BJ (cell line): ENCODE measurements at regions of chr10 and their contacts with region 1.

Region 1: DNA sequence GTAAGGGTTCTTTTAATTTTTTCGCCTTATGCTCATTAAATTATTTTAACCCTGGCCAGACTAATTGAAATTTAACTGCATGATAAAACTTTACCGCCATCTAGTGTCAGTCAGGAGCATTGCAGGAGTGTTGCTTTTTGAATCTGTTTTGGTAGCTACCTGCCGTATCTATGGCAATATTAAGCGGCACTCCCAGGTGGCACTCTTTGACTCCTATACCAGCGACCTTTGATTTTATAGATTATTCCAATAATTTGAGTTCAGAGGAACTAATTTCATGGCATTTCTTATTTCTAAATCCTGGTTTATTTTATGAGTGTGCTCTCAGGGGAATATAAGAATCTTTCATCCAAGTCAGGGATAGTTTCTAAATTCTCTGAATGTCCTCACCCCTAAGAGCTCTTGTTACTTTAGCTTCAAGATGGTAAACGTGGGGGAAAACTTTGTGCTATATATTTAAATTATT is 198.9 kb downstream of the REEP3 start:
- DNase-seq: no peak
- H3K4me3 ChIP-seq: no peak overlapping the region
- H3K27me3 ChIP-seq: peaks cover 3% of the 10 kb centered on the region
- CTCF ChIP-seq: peak; percentile 86

Region 2: GRCh38 chr10:63166742-63167258 is 553.3 kb before region 1 on chr10:
- CTCF ChIA-PET with region 1: interaction called, 148 read pairs
- POLR2A ChIA-PET with region 1: no interaction called
- DNase-seq: peak; percentile 24
- H3K4me3 ChIP-seq: no peak overlapping the region
- H3K27me3 ChIP-seq: no peaks in the 10 kb centered on the region
- CTCF ChIP-seq: peak; percentile 76

Region 3: GRCh38 chr10:63217120-63217605 is 502.9 kb before region 1 on chr10:
- CTCF ChIA-PET with region 1: interaction called, 13 read pairs
- POLR2A ChIA-PET with region 1: no interaction called
- DNase-seq: peak; percentile 19
- H3K4me3 ChIP-seq: no peak overlapping the region
- H3K27me3 ChIP-seq: no peaks in the 10 kb centered on the region
- CTCF ChIP-seq: peak; percentile 62

Region 4: GRCh38 chr10:63629363-63630084 is 90.6 kb before region 1 on chr10:
- CTCF ChIA-PET with region 1: interaction called, 40 read pairs
- POLR2A ChIA-PET with region 1: interaction called, 3 read pairs
- DNase-seq: peak; percentile 96
- H3K4me3 ChIP-seq: peak overlapping the region; percentile 62
- H3K27me3 ChIP-seq: no peaks in the 10 kb centered on the region
- CTCF ChIP-seq: peak; percentile 86

Region 5: DNA sequence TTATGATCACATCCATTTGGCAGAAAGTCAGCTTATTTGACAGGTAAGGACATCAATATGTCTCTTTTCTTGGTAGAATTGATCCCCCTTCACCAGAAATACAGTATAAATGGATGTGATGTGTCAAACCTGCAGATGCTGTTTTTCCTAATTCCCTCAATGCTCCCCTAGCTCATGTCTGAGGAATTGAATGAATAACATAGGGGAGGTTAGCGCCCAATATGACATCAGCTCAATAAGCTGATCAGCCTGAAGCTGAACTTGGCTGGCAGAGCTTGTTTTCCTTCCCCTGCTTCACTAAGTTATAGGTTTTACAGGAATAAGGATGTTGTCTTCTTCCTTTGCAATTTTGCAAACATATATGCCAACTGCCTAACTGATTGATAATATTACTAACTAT is 66.4 kb before region 1 on chr10:
- CTCF ChIA-PET with region 1: no interaction called
- POLR2A ChIA-PET with region 1: no interaction called
- DNase-seq: no peak
- H3K4me3 ChIP-seq: no peak overlapping the region
- H3K27me3 ChIP-seq: no peaks in the 10 kb centered on the region
- CTCF ChIP-seq: no peak

Region 6: DNA sequence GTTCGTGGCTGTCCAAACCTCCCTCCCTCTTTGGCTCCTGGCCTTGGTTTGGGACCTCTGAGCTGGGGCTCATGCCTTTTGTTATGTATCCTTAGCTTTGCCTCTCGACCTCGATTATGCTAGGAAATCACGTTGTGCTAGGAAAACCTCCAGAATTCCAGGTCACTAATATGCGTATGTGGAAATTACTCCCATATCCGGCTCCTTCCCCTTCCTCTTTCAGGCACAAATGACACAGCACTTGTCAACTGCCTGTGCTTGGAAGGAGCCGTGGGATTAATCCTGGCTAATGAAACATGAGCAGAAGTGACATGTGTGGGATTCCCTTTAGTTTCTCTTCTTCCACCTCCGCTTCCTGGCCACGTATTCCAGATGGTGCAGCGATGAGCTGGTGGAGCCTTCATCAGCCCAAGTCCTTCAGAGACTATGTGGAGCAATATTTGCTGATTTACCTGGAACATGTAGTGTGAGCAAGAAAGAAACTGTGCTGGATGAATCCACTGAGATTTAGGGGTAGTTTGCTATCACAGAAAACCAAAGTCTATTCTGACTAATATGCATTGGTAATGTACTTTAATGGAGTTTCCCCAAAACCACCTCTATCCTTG is 49.7 kb before region 1 on chr10:
- CTCF ChIA-PET with region 1: interaction called, 11 read pairs
- POLR2A ChIA-PET with region 1: no interaction called
- DNase-seq: no peak
- H3K4me3 ChIP-seq: no peak overlapping the region
- H3K27me3 ChIP-seq: no peaks in the 10 kb centered on the region
- CTCF ChIP-seq: no peak

Region 7: GRCh38 chr10:63738410-63738809 is 18.3 kb after region 1 on chr10:
- CTCF ChIA-PET with region 1: interaction called, 14 read pairs
- POLR2A ChIA-PET with region 1: no interaction called
- DNase-seq: no peak
- H3K4me3 ChIP-seq: no peak overlapping the region
- H3K27me3 ChIP-seq: peaks cover 1% of the 10 kb centered on the region; the same call in 1 of the 2 replicates
- CTCF ChIP-seq: no peak